ENCODE measurements at regions of chr14 and their contacts with region 1.

Region 1: GRCh38 chr14:50060871-50061663 is 55.3 kb downstream of the VCPKMT start:
- DNase-seq: peak; percentile 59
- H3K4me3 Mint-ChIP-seq: peak overlapping the region; percentile 93
- H3K27ac Mint-ChIP-seq: peak overlapping the region; percentile 100
- H3K4me1 Mint-ChIP-seq: peaks cover 85% of the 10 kb centered on the region
- H3K27me3 Mint-ChIP-seq: no peaks in the 10 kb centered on the region

Region 2: DNA sequence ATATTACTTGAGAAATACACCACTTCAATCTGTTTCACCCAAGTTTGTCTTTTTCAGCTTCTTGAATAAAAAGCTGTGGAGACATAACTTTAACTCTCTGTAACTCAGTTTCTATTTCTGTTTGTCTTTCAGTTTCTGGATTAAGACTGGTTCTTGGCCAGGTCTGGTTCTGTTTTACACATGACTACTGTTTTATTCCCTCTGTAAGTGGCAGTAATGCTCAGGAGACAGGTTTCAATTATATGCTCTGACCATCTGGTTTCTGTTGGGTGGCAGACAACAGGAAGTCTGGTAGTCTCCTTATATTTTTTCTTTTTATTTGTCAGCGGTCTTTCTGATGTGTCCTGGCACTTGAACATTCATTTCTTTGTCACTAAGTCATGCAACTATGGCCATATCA is 577.8 kb before region 1 on chr14:
- CTCF ChIA-PET with region 1: no interaction called
- POLR2A ChIA-PET with region 1: no interaction called
- DNase-seq: no peak
- H3K4me3 Mint-ChIP-seq: no peak overlapping the region
- H3K27ac Mint-ChIP-seq: no peak overlapping the region
- H3K4me1 Mint-ChIP-seq: peaks cover 6% of the 10 kb centered on the region
- H3K27me3 Mint-ChIP-seq: peaks cover 12% of the 10 kb centered on the region

Region 3: GRCh38 chr14:49867831-49868723 is 193.0 kb before region 1 on chr14:
- CTCF ChIA-PET with region 1: interaction called, 130 read pairs
- POLR2A ChIA-PET with region 1: interaction called, 189 read pairs
- DNase-seq: peak; percentile 99
- H3K4me3 Mint-ChIP-seq: peak overlapping the region; percentile 90
- H3K27ac Mint-ChIP-seq: peak overlapping the region; percentile 98
- H3K4me1 Mint-ChIP-seq: peaks cover 26% of the 10 kb centered on the region
- H3K27me3 Mint-ChIP-seq: no peaks in the 10 kb centered on the region

Region 4: DNA sequence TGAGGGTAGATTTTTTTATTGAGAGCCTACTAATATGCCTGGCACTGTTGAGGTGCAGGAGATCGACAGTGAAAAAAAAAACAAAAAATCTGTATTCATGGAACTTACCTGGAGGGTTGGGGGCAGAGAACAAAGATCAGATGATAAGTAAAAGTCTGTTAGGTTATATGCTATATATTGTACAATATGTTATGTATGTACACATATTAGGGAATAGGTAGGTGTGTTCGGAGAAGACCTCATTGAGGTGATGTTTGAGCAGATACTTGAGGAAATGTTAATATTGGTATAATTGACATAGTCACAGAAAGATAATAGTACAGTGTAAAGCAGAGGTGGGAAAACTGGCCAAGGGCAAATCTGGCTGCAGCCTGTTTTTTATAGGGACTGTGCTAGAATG is 162.6 kb before region 1 on chr14:
- CTCF ChIA-PET with region 1: interaction called, 5 read pairs
- POLR2A ChIA-PET with region 1: interaction called, 65 read pairs
- DNase-seq: no peak
- H3K4me3 Mint-ChIP-seq: peak overlapping the region; percentile 73
- H3K27ac Mint-ChIP-seq: peak overlapping the region; percentile 78
- H3K4me1 Mint-ChIP-seq: peaks cover 31% of the 10 kb centered on the region
- H3K27me3 Mint-ChIP-seq: no peaks in the 10 kb centered on the region

Region 5: DNA sequence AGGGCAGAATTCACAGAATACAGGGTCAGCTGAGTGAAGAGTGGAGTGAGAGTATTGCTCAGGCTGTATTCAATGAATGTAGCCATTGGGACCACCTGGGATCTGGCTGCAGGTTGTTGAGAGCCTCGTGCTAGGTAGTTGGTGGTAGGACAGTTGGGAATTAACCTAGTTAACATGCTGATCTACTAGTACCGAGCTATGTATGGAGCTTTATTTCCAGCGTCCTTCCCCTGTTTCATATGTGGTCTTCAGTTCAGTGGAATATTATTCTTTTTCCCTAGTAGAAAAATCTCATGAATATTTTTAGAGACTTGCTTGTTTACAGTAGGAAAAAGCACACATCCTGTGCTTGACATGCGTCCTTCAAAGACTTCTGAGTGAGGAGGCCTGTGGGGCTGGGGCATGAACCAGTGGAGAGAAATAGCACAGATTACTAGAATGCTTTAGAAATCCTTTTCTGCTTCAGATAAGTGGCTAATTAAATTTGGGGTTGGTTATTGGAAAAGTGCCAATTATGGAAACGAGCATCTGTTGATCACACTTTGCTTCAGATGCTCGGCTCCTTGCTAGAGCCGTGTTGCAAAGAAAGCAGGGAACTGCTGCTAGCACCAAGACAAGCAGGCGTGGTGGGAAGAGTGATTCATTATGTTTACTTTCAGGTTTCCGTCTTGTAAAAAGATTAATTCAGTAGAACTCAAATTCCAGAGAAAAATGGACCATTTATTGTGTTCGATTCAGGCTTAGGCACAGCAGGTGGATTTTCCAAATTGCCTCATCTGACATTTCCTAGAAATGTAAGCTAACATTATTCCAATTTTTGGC is 114.5 kb before region 1 on chr14:
- CTCF ChIA-PET with region 1: interaction called, 3 read pairs
- POLR2A ChIA-PET with region 1: interaction called, 17 read pairs
- DNase-seq: peak; percentile 35
- H3K4me3 Mint-ChIP-seq: peak overlapping the region; percentile 41
- H3K27ac Mint-ChIP-seq: peak overlapping the region; percentile 87
- H3K4me1 Mint-ChIP-seq: peaks cover 77% of the 10 kb centered on the region
- H3K27me3 Mint-ChIP-seq: no peaks in the 10 kb centered on the region

Region 6: DNA sequence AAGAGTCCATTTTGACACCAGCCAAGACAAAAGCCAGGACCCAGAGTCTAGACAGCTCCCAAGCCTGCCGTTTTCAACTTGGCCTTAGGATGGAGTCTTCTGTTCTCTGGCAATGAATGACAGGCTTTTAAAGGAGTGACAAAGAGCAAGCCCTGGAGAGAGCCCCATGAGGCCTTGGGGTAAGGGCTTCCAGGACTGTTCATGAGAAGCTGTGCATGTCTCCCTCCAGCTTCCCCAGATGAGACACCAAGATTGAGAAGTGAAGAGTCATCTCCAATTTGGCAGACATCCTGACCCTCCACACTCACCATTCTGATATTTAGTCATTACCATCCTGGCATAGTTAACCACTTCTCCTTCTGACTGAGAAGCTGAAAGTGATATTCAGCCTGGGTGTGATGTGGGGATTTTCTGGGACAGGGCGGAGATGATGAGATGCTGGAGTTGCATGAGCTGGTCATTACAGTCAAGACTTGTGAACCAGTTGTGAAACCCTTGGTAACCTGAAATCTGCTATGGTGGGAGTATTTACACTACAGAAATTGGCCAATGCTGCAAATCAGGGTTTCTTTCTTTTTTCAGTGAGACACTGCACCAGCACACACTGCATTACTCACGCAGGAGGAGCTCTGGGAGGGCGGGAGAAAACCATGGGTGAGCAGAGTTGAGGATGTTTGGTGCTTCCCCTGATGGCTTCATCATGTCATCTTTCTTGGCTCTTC is 22.5 kb before region 1 on chr14:
- CTCF ChIA-PET with region 1: interaction called, 27 read pairs
- POLR2A ChIA-PET with region 1: interaction called, 207 read pairs
- DNase-seq: peak; percentile 70
- H3K4me3 Mint-ChIP-seq: peak overlapping the region; percentile 79
- H3K27ac Mint-ChIP-seq: peak overlapping the region; percentile 98
- H3K4me1 Mint-ChIP-seq: peaks cover 83% of the 10 kb centered on the region
- H3K27me3 Mint-ChIP-seq: no peaks in the 10 kb centered on the region

Region 7: GRCh38 chr14:50099335-50099734 is 38.3 kb after region 1 on chr14:
- CTCF ChIA-PET with region 1: interaction called, 6 read pairs
- POLR2A ChIA-PET with region 1: interaction called, 122 read pairs
- DNase-seq: no peak
- H3K4me3 Mint-ChIP-seq: no peak overlapping the region
- H3K27ac Mint-ChIP-seq: no peak overlapping the region
- H3K4me1 Mint-ChIP-seq: peaks cover 46% of the 10 kb centered on the region
- H3K27me3 Mint-ChIP-seq: peaks cover 8% of the 10 kb centered on the region

Region 8: DNA sequence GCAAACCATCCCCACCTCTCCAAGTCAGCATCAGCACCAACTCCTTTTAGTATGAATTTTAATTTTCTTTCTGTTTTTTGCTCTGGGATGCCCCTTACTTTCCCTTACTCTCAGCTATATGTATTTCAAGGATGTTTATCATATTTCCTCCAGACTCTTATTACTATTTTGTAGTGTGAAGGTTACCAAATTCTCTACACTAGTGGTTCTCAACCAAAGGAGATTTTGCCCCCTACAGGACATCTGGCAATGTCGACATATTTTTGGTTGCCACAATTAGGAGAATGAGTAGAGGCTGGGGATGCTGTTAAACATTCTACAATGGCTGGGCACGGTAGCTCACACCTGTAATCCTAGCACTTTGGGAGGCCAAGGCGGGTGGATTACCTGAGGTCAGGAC is 199.4 kb after region 1 on chr14:
- CTCF ChIA-PET with region 1: no interaction called
- POLR2A ChIA-PET with region 1: no interaction called
- DNase-seq: peak; percentile 22
- H3K4me3 Mint-ChIP-seq: no peak overlapping the region
- H3K27ac Mint-ChIP-seq: no peak overlapping the region
- H3K4me1 Mint-ChIP-seq: peaks cover 7% of the 10 kb centered on the region
- H3K27me3 Mint-ChIP-seq: no peaks in the 10 kb centered on the region